ENCODE measurements at regions of chr12 and their contacts with region 1.

Region 1: DNA sequence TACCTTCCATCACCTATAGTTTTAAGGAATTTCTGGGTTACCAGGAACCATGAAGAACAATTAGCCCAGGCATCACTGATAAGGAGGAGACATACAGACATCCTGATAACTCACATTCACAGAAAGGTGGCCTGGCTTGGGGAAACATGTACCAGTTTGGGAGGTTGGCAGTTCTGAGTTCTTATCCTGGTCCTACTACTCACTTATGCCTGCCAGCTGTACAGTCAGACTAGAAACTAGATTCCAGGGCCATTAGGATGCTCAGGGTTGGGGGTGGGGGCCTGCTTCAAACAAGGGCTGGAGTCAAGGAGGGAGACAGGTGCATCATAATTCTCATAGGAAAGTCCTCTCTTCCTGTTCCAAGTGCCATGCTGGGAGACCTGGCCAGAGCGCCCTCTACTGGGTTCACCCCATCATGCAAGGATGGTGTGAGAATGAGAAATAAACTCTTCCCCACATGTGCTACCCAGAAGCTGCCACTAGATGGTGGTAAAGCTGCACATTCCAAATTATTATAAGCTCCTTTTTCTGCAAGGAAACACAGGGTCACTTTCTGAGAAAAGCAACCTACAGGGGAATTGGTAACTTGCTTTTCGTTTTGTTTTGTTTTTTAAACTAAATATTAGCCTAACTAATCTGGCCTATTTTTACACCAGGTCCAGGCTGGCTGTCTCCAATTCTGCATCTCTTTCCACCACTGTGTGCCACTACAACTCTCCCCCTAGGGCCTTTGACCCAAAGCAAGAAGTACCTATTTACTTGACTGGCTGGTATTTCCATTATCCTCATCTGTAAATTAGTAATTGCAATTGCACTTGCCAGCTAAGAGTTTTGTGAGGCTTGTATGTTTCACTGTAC is 14.5 kb downstream of the OAS2 start:
- DNase-seq: peak; percentile 80
- ATAC-seq: peak; percentile 71
- H3K4me3 Mint-ChIP-seq: no peak overlapping the region
- H3K27ac Mint-ChIP-seq: peak overlapping the region; percentile 31
- H3K4me1 Mint-ChIP-seq: peaks cover 38% of the 10 kb centered on the region
- H3K27me3 Mint-ChIP-seq: no peaks in the 10 kb centered on the region

Region 2: GRCh38 chr12:112900299-112901145 is 92.2 kb before region 1 on chr12:
- CTCF ChIA-PET with region 1: interaction called, 20 read pairs
- DNase-seq: peak; percentile 70
- ATAC-seq: peak; percentile 66
- H3K4me3 Mint-ChIP-seq: no peak overlapping the region
- H3K27ac Mint-ChIP-seq: no peak overlapping the region
- H3K4me1 Mint-ChIP-seq: peaks cover 37% of the 10 kb centered on the region
- H3K27me3 Mint-ChIP-seq: peaks cover 23% of the 10 kb centered on the region

Region 3: DNA sequence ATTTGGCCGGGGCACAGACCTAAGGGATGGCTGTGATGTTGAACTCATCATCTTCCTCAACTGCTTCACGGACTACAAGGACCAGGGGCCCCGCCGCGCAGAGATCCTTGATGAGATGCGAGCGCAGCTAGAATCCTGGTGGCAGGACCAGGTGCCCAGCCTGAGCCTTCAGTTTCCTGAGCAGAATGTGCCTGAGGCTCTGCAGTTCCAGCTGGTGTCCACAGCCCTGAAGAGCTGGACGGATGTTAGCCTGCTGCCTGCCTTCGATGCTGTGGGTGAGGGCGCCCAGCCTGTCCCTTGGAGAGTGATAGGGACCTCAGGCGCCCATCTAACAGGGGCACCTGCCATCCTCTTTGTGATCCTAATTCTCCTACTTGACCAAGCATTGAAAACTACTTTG is 42.1 kb before region 1 on chr12:
- CTCF ChIA-PET with region 1: interaction called, 21 read pairs
- DNase-seq: peak; percentile 34
- ATAC-seq: no peak
- H3K4me3 Mint-ChIP-seq: no peak overlapping the region
- H3K27ac Mint-ChIP-seq: no peak overlapping the region
- H3K4me1 Mint-ChIP-seq: peaks cover 35% of the 10 kb centered on the region
- H3K27me3 Mint-ChIP-seq: no peaks in the 10 kb centered on the region

Region 4: DNA sequence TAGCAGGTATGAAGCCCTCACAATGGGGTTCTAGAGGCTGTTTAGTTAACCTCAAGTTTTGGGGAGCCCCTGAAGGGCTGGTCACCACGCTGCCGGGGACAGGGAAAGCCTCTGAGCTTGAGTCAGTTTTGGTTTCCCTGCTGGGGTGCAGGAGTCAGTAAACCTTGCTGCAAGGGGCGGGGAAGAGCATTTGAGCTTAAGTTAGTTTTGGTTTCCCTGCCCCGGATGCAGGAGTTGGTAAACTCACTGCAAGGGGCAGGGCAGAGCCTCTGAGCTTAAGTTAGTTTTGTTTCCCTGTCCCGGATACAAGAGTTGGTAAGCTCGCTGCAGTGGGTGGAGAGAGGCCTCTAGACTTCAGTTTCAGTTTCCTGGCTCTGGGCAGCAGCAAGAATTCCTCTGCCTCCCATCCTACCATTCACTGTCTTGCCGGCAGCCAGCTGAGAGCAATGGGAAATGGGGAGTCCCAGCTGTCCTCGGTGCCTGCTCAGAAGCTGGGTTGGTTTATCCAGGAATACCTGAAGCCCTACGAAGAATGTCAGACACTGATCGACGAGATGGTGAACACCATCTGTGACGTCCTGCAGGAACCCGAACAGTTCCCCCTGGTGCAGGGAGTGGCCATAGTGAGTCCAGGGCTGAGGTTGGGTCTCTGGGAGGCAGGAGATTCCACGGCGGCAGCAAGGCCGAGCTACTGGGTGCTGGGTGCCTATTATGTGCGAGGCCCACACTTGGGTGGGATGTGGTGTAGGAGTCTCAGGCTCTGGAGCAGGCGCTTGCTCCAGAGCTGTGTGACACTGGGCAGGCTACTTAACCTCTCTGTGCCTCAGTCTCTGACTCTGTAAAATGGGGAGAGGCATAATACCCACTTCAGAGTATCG is 14.4 kb before region 1 on chr12 and contains the start of gene OAS2:
- CTCF ChIA-PET with region 1: interaction called, 67 read pairs
- DNase-seq: peak; percentile 96
- ATAC-seq: peak; percentile 92
- H3K4me3 Mint-ChIP-seq: peak within 1 kb of the TSS; percentile 89
- H3K27ac Mint-ChIP-seq: peak within 1 kb of the TSS; percentile 100
- H3K4me1 Mint-ChIP-seq: peaks cover 52% of the 10 kb centered on the region
- H3K27me3 Mint-ChIP-seq: no peaks in the 10 kb centered on the region
- total RNA-seq, gene OAS2: 276 to 383 TPM

Region 5: DNA sequence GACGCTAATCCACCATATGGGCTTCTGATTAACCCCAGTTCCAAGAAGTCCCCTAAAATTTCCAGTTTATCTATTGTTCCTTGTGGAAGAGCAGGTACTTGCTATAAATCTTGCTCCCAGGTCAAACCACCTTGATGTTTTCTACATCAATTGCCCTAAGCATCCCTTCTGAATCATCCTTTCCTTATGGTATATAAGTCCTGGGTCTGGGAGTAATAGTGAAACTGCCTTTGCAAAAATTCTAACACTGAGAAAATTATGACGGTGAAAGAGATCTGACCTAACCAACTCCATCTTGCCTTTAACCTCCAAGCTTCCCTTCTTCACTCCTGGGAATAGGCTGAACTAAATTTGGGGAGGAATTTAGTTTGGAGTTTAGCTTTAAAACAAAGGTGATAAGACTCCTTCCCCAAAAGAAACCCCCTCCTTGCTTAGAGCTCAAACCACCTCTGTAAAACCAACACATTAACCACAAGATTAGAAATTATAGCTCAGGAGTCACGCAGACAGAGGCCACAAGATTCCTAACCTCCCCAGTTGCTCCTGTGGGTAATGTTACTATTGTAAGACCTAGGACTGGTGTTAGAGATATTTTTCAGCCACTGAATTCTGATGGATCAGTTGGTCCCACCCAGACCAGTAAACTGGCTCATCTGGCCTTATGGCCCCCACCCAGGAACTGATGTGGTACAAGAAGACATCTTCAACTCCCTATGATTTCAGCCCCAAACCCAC is 30.0 kb after region 1 on chr12:
- CTCF ChIA-PET with region 1: interaction called, 12 read pairs
- DNase-seq: no peak
- ATAC-seq: peak; percentile 36
- H3K4me3 Mint-ChIP-seq: no peak overlapping the region
- H3K27ac Mint-ChIP-seq: no peak overlapping the region
- H3K4me1 Mint-ChIP-seq: peaks cover 17% of the 10 kb centered on the region
- H3K27me3 Mint-ChIP-seq: peaks cover 13% of the 10 kb centered on the region

Region 6: GRCh38 chr12:113310489-113310888 is 317.7 kb after region 1 on chr12:
- CTCF ChIA-PET with region 1: no interaction called
- DNase-seq: no peak
- ATAC-seq: no peak
- H3K4me3 Mint-ChIP-seq: no peak overlapping the region
- H3K27ac Mint-ChIP-seq: no peak overlapping the region
- H3K4me1 Mint-ChIP-seq: no peaks in the 10 kb centered on the region
- H3K27me3 Mint-ChIP-seq: no peaks in the 10 kb centered on the region

Measured in activated CD8-positive, alpha-beta memory T cell treated with anti-CD3 and anti-CD28 coated beads, Interleukin-2, amount 10 ng/mL, durations not matched to agents 7 days and 5 days (primary cell).